A673 (cell line): ENCODE measurements at regions of chr6 and their contacts with region 1.

Region 1: DNA sequence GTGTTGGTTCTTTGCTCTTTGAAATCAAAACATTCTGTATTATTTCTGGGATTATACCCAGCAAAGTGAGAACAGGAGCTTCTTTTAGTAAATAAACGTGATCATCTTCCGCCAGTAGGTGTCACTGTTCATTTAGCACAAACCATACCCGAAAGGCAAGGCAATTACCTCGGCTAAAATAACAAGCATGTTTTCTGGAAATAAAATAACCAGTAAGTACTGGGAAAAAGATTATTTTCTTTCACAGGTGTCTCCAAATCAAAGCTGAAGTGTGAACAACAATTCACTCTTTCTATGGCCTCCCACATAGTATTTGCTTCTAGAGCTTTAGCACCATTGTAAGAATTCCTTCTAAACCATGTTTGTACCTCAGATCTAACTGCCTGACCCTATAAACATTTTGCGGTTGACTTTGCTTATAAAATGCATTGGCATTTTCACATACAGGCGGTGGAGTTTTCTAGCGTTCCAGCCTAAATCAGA is 144.6 kb upstream of the AGPAT4 start:
- DNase-seq: peak; percentile 79
- H3K4me3 ChIP-seq: no peak overlapping the region
- H3K27ac ChIP-seq: no peak overlapping the region
- H3K4me1 ChIP-seq: peaks cover 10% of the 10 kb centered on the region
- H3K27me3 ChIP-seq: peaks cover 3% of the 10 kb centered on the region
- CTCF ChIP-seq: peak; percentile 77

Region 2: GRCh38 chr6:160355001-160355400 is 1063.5 kb before region 1 on chr6:
- CTCF ChIA-PET with region 1: no interaction called
- POLR2A ChIA-PET with region 1: no interaction called
- intact Hi-C with region 1: no loop called
- DNase-seq: no peak
- H3K4me3 ChIP-seq: no peak overlapping the region
- H3K27ac ChIP-seq: no peak overlapping the region
- H3K4me1 ChIP-seq: no peaks in the 10 kb centered on the region
- H3K27me3 ChIP-seq: peaks cover 50% of the 10 kb centered on the region
- CTCF ChIP-seq: no peak

Region 3: DNA sequence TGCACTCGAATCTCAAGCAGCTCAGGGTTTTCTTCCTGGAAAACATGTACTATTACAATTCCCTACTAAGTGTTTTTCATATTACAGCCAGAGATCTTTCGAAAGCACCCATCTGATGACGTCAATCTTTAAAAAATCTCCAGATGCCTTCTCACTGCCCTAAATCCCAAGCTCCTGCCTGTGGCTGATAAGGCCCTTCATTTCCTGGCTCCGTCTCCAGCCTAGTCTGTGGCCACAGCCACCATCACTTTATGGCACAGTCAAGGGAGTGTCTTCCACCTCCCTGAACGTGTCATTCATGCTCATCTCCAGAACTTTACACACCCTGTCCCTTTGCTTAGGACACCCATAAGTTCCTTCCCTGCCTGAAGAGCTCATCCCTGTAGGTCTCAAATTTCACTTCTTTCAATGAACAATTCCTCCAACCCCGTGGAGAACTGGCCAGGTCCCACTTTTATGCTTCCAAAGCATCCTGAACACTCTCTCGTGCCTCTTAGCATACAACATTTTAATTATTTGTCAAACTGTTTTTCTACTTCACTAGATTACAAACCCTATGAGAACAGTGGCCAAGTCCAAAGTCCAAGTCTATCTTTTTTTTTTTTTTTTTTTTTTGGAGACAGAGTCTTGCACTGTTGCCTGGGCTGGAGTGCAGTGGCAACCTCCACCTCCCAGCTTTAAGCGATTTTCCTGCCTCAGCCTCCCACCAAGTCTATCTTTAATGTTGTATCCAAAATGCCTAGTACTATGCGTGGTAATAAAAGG is 38.5 kb before region 1 on chr6:
- CTCF ChIA-PET with region 1: interaction called, 10 read pairs
- POLR2A ChIA-PET with region 1: no interaction called
- intact Hi-C with region 1: no loop called
- DNase-seq: no peak
- H3K4me3 ChIP-seq: no peak overlapping the region
- H3K27ac ChIP-seq: no peak overlapping the region
- H3K4me1 ChIP-seq: peaks cover 5% of the 10 kb centered on the region
- H3K27me3 ChIP-seq: no peaks in the 10 kb centered on the region
- CTCF ChIP-seq: no peak